GM13977 (cell line): ENCODE measurements at regions of chr7 and their contacts with region 1.

Region 1: DNA sequence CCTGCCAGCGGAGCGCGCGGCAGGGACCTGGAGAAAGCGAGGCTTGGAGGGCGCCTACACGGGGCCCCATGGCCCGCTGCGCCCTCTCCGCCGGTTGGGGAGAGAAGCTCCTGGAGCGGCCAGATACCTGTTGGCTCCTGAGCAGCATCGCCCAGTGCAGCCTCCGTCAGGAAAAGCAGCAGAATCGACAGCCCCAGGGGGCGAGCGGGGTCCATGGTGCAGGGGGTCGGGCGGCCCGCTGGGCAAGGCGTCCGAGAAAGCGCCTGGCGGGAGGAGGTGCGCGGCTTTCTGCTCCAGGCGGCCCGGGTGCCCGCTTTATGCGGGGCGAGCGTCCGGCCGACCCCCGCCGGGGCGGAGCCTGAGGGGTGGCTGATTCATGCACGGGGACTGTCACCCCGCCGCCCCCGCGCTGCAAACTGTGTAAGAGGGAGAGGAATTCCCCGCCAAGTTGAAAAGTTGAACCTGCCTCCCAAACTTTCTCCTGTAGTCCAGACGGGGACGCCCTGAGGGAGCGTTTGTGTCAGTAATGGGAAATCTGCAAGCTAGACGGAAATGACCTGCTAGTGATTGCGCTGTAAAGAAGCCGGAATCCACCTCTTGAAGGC is at the start of gene TFPI2:
- DNase-seq: peak; percentile 31
- CTCF ChIP-seq: no peak

Region 2: DNA sequence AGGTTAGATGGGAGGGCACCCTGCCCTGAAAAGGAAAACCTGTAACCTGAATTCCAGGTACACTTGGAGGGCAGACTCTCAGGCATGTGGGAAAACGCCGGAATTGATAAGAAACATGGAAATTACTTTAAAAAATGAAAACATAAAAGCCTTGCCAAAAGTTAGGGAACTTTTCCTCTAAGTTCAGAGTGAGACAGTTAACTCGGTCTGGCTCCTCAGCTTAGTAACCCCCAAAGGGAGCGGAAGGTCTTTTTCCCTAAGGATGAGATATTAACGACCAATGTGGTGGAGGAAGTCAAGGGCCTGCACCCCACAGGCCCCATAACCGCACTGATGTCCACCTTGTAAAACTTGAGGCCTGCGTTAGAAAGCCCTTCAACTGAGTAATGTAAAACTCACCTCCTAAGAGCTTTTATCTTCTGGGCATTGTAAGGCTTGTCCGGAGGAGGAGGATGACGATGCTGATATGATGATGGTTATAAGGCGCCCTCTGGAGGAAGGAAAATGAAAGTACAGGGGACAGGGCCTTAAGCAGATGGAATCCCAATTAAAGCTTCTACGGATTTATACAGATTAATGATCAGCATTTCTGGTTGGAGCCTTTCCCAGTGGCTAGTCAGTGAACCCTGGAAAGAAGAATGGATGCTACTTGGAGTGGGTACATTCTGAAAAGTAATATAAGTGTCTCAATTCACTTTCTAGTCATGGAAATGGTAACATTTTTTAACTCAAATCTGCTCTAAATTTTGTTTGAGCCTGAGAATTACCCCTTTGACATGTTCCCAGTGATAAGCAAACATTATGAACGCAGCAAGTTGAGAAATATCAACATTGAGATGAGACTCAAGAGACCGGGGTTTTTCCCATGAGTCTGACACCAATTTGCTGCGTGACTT is 504.8 kb after region 1 on chr7:
- in situ Hi-C with region 1: loop called (anchors 25 kb)
- DNase-seq: peak; percentile 82
- CTCF ChIP-seq: peak; percentile 63

Region 3: GRCh38 chr7:94632338-94633013 is 741.9 kb after region 1 on chr7:
- in situ Hi-C with region 1: no loop called
- DNase-seq: peak; percentile 21
- CTCF ChIP-seq: no peak